PC-9 (cell line): ENCODE measurements at regions of chr21 and their contacts with region 1.

Region 1: GRCh38 chr21:38486221-38486620 is 12.1 kb downstream of the ERG start:
- DNase-seq: no peak
- H3K4me3 ChIP-seq: no peak overlapping the region
- H3K27ac ChIP-seq: no peak overlapping the region
- H3K4me1 ChIP-seq: no peaks in the 10 kb centered on the region
- H3K27me3 ChIP-seq: peaks cover 30% of the 10 kb centered on the region
- CTCF ChIP-seq: no peak

Region 2: DNA sequence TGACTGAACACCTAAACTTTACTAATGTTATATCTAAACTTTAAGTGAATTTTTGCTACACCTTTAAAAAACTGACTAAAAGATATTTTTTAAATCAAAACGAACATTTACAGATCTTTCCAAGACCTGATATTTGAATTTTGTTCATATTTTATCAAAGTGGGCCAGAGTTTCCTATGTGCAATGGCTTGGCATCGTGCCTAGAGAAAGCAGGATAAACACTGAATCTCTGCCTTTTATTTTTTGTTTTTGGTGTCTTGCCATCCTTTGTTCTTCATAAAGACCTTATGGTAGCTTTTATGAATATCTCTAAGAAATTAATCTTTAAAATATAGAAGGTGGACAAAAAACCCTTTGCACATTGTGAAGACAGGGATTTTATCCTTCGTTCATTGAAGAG is 1193.3 kb before region 1 on chr21:
- CTCF ChIA-PET with region 1: interaction called, 10 read pairs
- POLR2A ChIA-PET with region 1: no interaction called
- intact Hi-C with region 1: no loop called
- DNase-seq: no peak
- H3K4me3 ChIP-seq: no peak overlapping the region
- H3K27ac ChIP-seq: no peak overlapping the region
- H3K4me1 ChIP-seq: no peaks in the 10 kb centered on the region
- H3K27me3 ChIP-seq: 0 out of 2 replicates have a peak, but pooled peaks cover under 1% of the 10 kb centered on the region
- CTCF ChIP-seq: no peak

Region 3: GRCh38 chr21:38196036-38196435 is 290.2 kb before region 1 on chr21:
- CTCF ChIA-PET with region 1: no interaction called
- POLR2A ChIA-PET with region 1: no interaction called
- intact Hi-C with region 1: no loop called
- DNase-seq: no peak
- H3K4me3 ChIP-seq: no peak overlapping the region
- H3K27ac ChIP-seq: no peak overlapping the region
- H3K4me1 ChIP-seq: no peaks in the 10 kb centered on the region
- H3K27me3 ChIP-seq: no peaks in the 10 kb centered on the region
- CTCF ChIP-seq: no peak

Region 4: GRCh38 chr21:38219049-38219628 is 267.1 kb before region 1 on chr21:
- CTCF ChIA-PET with region 1: no interaction called
- POLR2A ChIA-PET with region 1: no interaction called
- intact Hi-C with region 1: no loop called
- DNase-seq: peak in 1 of 2 experiments; percentile 25
- H3K4me3 ChIP-seq: no peak overlapping the region
- H3K27ac ChIP-seq: no peak overlapping the region
- H3K4me1 ChIP-seq: no peaks in the 10 kb centered on the region
- H3K27me3 ChIP-seq: no peaks in the 10 kb centered on the region
- CTCF ChIP-seq: peak; percentile 83

Region 5: GRCh38 chr21:38424305-38425019 is 61.8 kb before region 1 on chr21:
- CTCF ChIA-PET with region 1: no interaction called
- POLR2A ChIA-PET with region 1: no interaction called
- intact Hi-C with region 1: no loop called
- DNase-seq: no peak
- H3K4me3 ChIP-seq: no peak overlapping the region
- H3K27ac ChIP-seq: no peak overlapping the region
- H3K4me1 ChIP-seq: no peaks in the 10 kb centered on the region
- H3K27me3 ChIP-seq: peaks cover 36% of the 10 kb centered on the region
- CTCF ChIP-seq: no peak